H1 (cell line): ENCODE measurements at regions of chr2 and their contacts with region 1.

Region 1: DNA sequence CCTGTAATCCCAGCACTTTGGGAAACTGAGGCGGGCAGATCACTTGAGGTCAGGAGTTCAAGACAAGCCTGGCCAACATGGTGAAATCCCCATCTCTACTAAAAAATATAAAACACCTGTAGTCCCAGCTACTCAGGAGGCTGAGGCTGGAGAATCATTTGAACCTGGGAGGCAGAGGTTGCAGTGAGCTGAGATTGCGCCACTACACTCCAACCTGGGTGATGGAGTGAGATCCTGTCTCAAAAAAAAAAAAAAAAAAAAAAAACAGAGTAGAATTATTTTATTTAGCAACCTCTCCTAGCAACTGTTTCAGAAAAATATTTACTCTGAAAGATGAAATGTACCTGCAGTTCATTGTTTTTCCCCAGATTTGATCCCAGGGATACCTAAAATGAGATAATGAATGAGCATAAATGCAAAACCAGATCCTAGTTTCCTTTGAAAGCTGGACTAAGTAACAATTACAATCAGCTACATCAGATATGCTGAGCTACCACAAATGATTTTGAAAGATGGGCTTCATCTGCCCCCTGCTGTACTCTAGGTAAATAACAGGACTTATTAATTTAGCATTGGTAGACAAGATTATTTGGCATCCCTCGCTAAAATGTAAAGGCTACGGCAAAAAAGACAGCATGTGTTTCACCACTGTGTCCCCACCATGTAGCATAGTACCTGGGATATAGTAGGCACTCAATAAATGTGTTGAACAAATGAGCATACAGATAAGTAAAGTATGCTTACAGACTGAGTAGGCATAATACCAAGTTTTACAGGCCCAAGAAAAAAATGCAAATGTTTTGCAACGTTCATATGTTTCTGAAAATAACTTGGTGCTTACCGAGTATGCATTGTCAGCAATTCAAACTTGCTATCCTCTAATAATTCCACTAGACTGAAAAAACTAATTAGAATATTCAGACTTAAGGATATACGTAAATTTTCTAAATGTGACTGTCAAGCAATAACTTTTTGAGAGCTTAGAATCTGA is 102.5 kb downstream of the ATL2 start:
- DNase-seq: no peak
- H3K4me3 ChIP-seq: no peak overlapping the region
- H3K27ac ChIP-seq: no peak overlapping the region
- H3K4me1 ChIP-seq: peaks cover 2 to 20% (median 14%) of the 10 kb centered on the region in 4 experiments; a peak in 5 of 7 replicates
- H3K27me3 ChIP-seq: no peaks in the 10 kb centered on the region
- CTCF ChIP-seq: peak in 2 of 3 experiments; percentile 39 to 49; a peak in 2 of 4 replicates
- EP300 ChIP-seq: no peak
- POLR2A ChIP-seq: no peak
- RAD21 ChIP-seq: peak; percentile 84 to 85

Region 2: GRCh38 chr2:38245114-38245641 is 29.4 kb before region 1 on chr2:
- CTCF ChIA-PET with region 1: interaction called, 10 read pairs
- POLR2A ChIA-PET with region 1: no interaction called
- DNase-seq: no peak
- H3K4me3 ChIP-seq: no peak overlapping the region
- H3K27ac ChIP-seq: no peak overlapping the region
- H3K4me1 ChIP-seq: no peaks in the 10 kb centered on the region
- H3K27me3 ChIP-seq: no peaks in the 10 kb centered on the region
- CTCF ChIP-seq: no peak
- EP300 ChIP-seq: no peak
- POLR2A ChIP-seq: no peak
- RAD21 ChIP-seq: no peak

Region 3: GRCh38 chr2:38301340-38301968 is 26.9 kb after region 1 on chr2:
- CTCF ChIA-PET with region 1: no interaction called
- POLR2A ChIA-PET with region 1: no interaction called
- DNase-seq: no peak
- H3K4me3 ChIP-seq: no peak overlapping the region
- H3K27ac ChIP-seq: peak overlapping the region; percentile 42; the same call in 1 of the 2 replicates
- H3K4me1 ChIP-seq: peaks cover 1 to 12% (median 7%) of the 10 kb centered on the region in 4 experiments
- H3K27me3 ChIP-seq: no peaks in the 10 kb centered on the region
- CTCF ChIP-seq: no peak
- EP300 ChIP-seq: no peak
- POLR2A ChIP-seq: no peak
- RAD21 ChIP-seq: no peak